Lower leg skin (tissue), 4 donors: ENCODE measurements at regions of chr12 and their contacts with region 1.

Region 1: DNA sequence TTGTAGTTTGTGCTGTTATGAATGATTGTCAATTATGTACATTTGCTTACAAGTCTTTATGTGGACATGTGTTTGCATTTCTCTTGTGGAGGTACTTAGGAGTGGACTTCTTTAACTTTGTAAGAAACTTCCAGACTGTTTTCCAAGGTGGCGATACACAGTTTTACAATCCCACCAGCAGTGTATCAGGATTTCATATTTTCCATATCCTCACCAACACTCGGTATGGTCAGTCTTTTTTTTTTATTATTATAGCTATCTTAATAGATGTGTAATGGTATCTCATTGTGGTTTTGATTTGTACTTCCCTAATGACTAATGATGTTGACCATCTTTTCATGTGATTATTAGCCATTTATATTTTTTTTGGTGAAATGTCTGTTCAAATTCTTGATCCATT is 73.7 kb upstream of the KCNH3 start:
- DNase-seq: no peak
- H3K4me3 ChIP-seq: no peak overlapping the region
- CTCF ChIP-seq: no peak
- POLR2A ChIP-seq: no peak

Region 2: DNA sequence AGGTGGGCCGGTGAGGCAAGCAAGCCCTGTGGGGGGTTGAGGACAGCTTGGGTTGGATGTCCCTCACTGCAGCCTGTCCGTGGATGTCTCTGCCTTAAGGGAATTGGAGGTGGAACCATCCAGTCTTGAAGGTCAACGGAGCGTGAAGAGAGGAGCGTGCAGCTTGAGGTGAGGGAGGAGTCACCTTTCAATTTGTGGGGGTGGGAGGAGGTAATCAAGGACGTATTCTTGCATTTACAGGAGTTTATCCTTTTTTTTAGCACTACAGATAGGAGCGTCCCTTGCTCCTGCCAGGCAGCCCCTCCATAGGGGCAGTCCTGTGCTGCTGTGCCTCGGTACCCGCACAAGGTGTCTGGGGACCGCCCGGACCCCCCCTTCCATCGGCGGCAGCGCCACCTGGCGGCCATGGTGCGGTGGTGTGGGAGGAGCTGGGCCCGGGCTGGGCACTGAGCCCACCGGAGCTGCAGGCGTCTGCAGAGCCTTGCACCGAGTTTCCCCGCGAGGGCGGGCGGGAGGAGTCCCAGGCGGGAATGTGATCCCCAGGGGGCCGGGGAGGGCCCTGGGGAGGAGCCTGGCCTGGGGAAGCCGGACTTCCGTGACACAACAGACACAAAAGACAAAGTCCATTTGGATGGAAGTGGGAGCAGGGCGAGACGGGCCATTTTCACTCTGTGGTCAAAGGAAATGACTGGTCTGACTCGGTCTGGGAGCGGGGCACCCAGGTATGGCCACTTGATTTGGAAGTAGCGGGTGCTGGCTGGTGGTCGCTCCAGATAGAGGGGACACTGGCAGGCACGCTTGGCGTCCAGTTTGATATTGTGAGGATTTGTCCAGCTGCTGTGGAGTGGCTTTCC is 117.5 kb before region 1 on chr12:
- intact Hi-C with region 1: no loop called
- DNase-seq: peak in 1 of 2 donors; percentile 94
- H3K4me3 ChIP-seq: no peak overlapping the region
- CTCF ChIP-seq: peak in 1 of 3 donors; percentile 59
- POLR2A ChIP-seq: no peak

Region 3: GRCh38 chr12:49442915-49443314 is 22.2 kb before region 1 on chr12:
- intact Hi-C with region 1: loop called (anchors 2 kb)
- DNase-seq: no peak
- H3K4me3 ChIP-seq: no peak overlapping the region
- CTCF ChIP-seq: no peak
- POLR2A ChIP-seq: no peak